Left cardiac atrium (tissue), 4 donors: ENCODE measurements at regions of chr1 and their contacts with region 1.

Region 1: DNA sequence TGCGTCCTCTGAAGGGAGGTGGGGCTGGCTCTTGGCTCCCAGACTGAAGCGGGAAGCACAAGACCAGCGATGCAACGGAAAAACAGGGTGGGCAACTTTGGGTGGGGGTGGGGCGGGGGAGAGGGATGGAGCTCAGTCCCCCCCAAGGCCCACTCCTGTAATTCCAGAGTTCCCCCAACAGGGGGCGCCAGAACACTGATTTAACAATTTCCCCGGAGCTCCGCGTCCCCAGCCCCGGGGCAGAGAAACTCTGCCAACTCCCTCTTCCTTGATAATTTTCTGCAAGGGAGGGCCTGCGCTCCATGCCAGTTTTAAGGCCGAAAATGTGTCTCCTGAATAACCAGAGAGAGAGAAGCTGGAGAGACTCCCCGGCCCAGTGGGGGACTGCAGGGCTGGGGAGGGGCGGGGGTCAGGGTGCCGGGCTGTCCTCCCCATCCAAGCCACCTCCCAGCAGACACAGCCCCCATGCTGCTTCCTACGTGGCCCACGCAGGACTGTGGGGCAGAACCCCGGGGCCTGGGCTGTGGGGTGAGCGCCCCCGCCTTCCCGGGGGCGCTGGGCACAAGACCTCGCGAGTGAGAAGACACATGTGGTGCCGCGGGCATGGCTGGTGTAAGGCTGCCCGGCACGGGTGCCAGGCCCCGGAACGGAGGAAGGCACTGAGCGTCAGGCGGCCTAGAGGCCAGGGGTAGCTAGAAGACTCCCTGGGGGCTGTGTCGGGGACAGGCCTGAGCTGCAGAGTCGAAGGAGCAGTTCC is 51.4 kb downstream of the KIF21B start:
- DNase-seq: peak; percentile 76
- ATAC-seq: peak; percentile 37 to 81

Region 2: DNA sequence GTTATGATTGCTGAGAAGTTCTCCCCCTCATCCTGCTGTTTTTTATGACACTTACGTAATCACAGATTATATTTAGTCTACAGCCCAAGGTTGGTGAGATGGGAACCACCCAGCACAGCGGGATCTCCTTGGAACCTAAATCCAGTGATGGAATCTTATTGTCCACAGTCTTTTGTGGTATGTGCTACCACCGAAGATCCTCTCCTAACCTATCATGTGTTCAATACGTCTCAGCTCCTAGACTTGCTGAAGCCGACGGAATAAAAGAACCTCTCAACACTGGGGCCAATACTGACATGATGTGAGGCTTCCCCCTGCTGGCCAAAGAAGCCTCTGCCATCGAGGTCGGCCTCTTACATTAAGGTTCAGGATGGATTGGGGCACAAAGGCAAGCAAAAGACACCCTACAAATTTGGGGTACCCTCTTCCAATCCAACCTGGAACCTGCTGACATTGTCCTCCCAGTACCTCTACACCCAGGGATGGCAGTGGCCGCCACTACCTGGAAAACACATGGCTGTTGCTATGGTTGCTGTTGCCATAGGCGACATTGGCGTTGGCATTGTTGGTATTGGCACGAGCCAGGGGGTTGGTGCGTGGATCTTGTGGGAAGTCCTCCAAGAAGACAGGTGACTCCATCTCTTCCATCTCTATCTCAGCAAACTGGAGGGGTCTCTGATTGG is 70.8 kb after region 1 on chr1:
- intact Hi-C with region 1: loop called (anchors 2 kb)
- DNase-seq: peak; percentile 67
- ATAC-seq: peak; percentile 85 to 86

Region 3: GRCh38 chr1:201114236-201115131 is 142.4 kb after region 1 on chr1:
- intact Hi-C with region 1: loop called (anchors 2 to 10 kb)
- DNase-seq: peak; percentile 88
- ATAC-seq: peak; percentile 95 to 96

Region 4: DNA sequence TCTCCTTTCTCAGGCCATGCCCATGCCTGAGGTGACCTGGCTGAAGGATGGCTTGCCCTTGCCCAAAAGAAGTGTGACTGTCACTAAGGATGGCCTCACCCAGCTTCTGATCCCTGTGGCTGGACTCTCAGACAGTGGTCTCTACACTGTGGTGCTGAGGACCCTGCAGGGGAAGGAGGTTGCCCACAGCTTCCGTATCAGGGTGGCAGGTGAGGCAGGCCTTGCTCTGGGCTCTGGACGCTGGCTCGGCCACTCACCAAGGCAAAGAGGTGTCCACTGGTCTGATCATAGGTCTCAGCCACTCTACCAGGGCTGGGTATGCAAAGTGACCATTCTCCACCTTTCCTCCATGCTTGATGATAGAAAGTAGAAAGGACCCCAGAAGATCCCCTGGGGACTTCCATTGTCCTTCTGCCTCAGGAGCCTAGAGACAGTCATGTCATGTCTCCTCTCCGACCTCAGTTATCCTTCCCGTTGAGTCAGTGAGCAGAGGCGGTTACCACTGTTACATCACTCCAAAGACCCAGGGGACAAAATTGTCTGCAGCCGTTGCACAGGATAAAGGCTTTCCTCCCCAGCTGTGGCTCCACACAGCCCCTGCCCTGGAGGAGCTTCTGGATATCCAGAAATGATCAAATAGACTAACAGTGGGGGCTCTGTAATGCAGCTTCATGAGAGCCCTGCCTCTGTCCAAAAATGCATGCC is 252.7 kb after region 1 on chr1:
- intact Hi-C with region 1: loop called (anchors 5 to 10 kb)
- DNase-seq: no peak
- ATAC-seq: no peak

Region 5: DNA sequence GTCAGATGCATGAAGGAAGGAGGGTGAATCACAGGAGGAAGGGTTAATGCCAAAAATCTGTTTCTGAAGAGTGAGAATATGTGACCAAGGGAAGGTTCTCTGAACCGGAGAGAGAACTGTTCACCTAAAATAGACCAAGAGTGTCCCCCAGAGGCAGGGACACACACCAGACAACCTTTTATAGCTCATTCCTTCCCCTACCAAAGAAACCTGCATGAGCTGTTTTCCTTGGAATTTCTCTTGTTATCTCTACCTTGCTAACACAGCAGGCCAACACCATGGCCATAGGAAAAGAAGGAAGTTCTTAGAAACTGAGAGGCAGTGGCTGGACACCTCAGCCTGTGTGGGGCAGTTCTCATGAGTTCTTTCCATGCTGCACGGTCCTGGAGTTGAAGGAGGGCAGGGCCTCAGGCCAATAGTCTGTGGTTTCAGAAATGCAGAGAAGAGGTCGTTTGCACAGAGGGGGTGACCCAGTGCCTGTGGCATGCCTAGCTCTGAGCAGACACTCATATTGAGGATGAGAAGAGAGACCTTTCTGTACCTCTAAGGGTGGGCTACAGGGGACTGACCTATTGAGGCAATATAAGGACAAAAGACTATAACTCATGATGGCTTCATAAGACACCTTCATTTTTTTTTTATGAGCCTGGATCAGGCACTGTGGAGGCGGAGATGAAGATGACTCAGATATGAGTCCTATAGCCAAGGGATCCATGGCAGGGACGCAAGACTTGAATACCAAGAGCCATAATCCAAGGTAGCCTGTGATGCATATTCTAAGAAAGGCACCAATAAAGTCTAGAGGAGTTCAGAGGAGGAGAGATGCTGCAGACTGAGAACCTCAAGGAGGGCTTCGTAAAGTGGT is 257.9 kb after region 1 on chr1:
- intact Hi-C with region 1: loop called in 1 of 2 experiments (anchors 10 kb)
- DNase-seq: no peak
- ATAC-seq: no peak